IMR-90 (cell line): ENCODE measurements at regions of chr20 and their contacts with region 1.

Region 1: DNA sequence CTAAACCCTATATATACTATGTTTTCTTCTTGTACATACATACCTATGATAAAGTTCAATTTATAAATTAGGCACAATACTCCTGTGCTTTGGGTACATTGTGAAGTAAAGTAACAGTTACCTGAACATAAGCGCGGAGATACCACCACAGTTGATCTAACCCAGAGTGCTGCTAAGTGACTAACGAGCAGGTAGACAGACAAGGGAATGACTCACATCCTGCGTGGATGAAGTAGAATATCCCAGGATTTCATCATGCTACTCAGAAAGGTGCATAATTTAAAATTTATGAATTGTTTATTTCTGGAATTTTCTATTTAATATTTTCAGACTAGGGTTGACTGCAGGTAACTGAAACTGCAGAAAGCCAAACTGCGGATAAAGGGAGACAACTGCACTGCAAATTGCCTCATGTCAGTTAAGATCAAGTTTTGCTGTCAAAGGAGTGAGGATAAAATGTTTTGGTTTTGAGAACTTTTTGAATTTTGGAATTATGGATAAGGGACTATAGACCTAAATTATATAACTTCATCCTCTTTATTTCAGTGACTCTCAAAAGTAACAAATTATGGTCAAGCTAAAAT is 14.4 kb downstream of the MKKS start:
- DNase-seq: peak; percentile 19
- ATAC-seq: no peak
- H3K4me3 ChIP-seq: no peak overlapping the region
- H3K27ac ChIP-seq: no peak overlapping the region
- H3K4me1 ChIP-seq: no peaks in the 10 kb centered on the region; the same call in 1 of the 2 replicates
- H3K27me3 ChIP-seq: no peaks in the 10 kb centered on the region
- CTCF ChIP-seq: no peak
- POLR2A ChIP-seq: no peak
- RAD21 ChIP-seq: no peak

Region 2: DNA sequence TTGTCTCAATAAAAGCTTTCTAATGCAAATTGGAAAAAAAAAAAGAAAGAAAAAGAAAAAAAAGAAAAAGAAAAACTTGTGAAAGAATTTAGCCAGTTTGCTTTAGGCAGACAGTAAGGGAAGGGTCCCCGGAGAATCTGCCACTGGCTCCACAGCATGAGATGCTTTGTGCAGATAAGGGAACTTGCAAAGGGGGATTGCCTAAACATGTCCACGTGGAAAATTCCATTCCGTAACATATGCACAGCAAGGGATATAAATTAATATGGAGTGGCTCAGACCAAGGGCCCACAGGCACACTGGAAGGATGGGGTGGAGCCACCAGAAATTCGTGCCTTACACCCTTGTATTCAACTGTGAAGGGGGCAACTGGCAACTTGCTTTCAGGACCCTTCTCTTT is 31.0 kb before region 1 on chr20:
- CTCF ChIA-PET with region 1: no interaction called
- POLR2A ChIA-PET with region 1: no interaction called
- dilution Hi-C with region 1: no loop called
- in situ Hi-C with region 1: no loop called
- intact Hi-C with region 1: loop called (anchors 2 kb)
- DNase-seq: no peak
- ATAC-seq: no peak
- H3K4me3 ChIP-seq: no peak overlapping the region
- H3K27ac ChIP-seq: no peak overlapping the region
- H3K4me1 ChIP-seq: peaks cover 2% of the 10 kb centered on the region; the same call in 1 of the 2 replicates
- H3K27me3 ChIP-seq: no peaks in the 10 kb centered on the region
- CTCF ChIP-seq: no peak
- POLR2A ChIP-seq: no peak
- RAD21 ChIP-seq: no peak